ENCODE measurements at regions of chr9 and their contacts with region 1.

Region 1: GRCh38 chr9:122099271-122099869 is 6.3 kb upstream of the TTLL11 start:
- DNase-seq: peak; percentile 79
- H3K4me3 Mint-ChIP-seq: no peak overlapping the region
- H3K27ac Mint-ChIP-seq: no peak overlapping the region
- H3K4me1 Mint-ChIP-seq: peaks cover 6% of the 10 kb centered on the region
- H3K27me3 Mint-ChIP-seq: no peaks in the 10 kb centered on the region
- CTCF ChIP-seq: peak; percentile 84

Region 2: GRCh38 chr9:121545875-121546423 is 553.4 kb before region 1 on chr9:
- CTCF ChIA-PET with region 1: interaction called, 12 read pairs
- POLR2A ChIA-PET with region 1: no interaction called
- intact Hi-C with region 1: loop called (anchors 10 kb)
- DNase-seq: peak; percentile 97
- H3K4me3 Mint-ChIP-seq: peak overlapping the region; percentile 33
- H3K27ac Mint-ChIP-seq: peak overlapping the region; percentile 19
- H3K4me1 Mint-ChIP-seq: no peaks in the 10 kb centered on the region
- H3K27me3 Mint-ChIP-seq: no peaks in the 10 kb centered on the region
- CTCF ChIP-seq: peak; percentile 96

Region 3: GRCh38 chr9:121698627-121699570 is 400.5 kb before region 1 on chr9:
- CTCF ChIA-PET with region 1: no interaction called
- POLR2A ChIA-PET with region 1: no interaction called
- intact Hi-C with region 1: no loop called
- DNase-seq: peak; percentile 47
- H3K4me3 Mint-ChIP-seq: peak overlapping the region; percentile 75
- H3K27ac Mint-ChIP-seq: no peak overlapping the region
- H3K4me1 Mint-ChIP-seq: peaks cover 20% of the 10 kb centered on the region
- H3K27me3 Mint-ChIP-seq: no peaks in the 10 kb centered on the region
- CTCF ChIP-seq: no peak

Region 4: DNA sequence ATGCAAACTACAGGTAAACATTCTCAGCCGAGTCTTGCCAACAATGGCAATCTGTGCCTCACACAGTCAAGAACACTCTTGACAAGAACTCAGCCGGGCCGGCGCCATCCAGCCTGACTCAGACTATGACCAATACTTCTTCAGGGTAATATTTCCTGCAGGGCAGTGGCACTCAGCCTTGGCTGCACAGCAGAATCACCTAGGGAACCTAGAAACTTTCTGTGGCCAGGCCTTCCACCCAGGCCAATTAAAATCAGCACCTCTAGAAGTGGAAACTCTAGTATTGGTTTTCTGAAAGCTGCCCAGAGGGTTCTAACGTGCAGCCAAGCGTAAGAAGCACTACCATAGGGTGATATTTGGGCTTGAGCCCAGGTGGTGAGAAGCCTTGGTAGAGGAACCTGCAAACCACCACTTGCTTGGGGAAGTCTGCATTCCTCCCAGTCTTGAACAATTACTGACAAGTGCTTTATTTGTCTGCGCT is 126.8 kb before region 1 on chr9:
- CTCF ChIA-PET with region 1: no interaction called
- POLR2A ChIA-PET with region 1: no interaction called
- intact Hi-C with region 1: no loop called
- DNase-seq: peak; percentile 95
- H3K4me3 Mint-ChIP-seq: no peak overlapping the region
- H3K27ac Mint-ChIP-seq: peak overlapping the region; percentile 71
- H3K4me1 Mint-ChIP-seq: peaks cover 21% of the 10 kb centered on the region
- H3K27me3 Mint-ChIP-seq: no peaks in the 10 kb centered on the region
- CTCF ChIP-seq: no peak

Region 5: GRCh38 chr9:121989010-121989409 is 110.4 kb before region 1 on chr9:
- CTCF ChIA-PET with region 1: no interaction called
- POLR2A ChIA-PET with region 1: no interaction called
- intact Hi-C with region 1: no loop called
- DNase-seq: no peak
- H3K4me3 Mint-ChIP-seq: no peak overlapping the region
- H3K27ac Mint-ChIP-seq: no peak overlapping the region
- H3K4me1 Mint-ChIP-seq: peaks cover 5% of the 10 kb centered on the region
- H3K27me3 Mint-ChIP-seq: no peaks in the 10 kb centered on the region
- CTCF ChIP-seq: no peak

Region 6: DNA sequence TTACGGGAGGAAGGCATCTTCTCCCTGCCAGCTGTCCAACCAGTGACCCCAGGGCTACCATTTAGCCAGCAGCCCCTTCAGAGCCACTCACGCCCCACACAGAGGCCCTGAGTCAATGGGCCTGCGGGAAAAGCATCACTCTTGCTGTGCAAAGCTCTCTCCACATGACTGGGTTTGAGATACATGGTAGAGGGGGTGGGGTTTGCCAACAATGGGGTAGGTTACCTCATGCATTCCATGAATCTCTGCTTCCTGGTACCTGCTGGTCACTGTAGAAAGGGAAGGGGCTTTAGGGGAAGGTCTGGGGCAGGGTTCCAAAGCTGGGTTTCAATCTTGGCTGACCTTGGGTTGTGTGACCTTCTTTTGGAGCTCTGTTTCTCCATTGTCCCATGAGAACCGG is 16.7 kb after region 1 on chr9:
- CTCF ChIA-PET with region 1: interaction called, 237 read pairs
- POLR2A ChIA-PET with region 1: no interaction called
- intact Hi-C with region 1: no loop called
- DNase-seq: no peak
- H3K4me3 Mint-ChIP-seq: no peak overlapping the region
- H3K27ac Mint-ChIP-seq: no peak overlapping the region
- H3K4me1 Mint-ChIP-seq: peaks cover 5% of the 10 kb centered on the region
- H3K27me3 Mint-ChIP-seq: peaks cover 35% of the 10 kb centered on the region
- CTCF ChIP-seq: no peak

Region 7: DNA sequence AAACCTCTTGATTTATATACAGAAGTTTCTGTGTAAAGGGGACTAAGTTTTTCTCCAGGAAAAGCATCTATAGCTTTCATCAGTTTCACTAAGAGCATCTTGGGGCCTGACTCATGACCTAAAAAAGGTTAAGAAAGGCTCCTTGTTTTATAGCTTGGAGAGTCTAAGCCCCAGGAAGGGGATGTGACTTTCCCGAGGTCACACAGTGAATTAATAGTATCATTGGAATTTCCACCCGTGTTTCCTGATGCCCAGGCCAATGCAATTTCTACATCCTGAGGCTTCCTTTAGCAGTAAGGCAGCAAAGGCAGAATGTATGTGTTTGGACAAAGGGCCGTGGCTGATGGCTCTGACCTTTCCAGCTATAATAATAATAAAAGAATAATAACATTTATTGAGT is 69.0 kb after region 1 on chr9:
- CTCF ChIA-PET with region 1: no interaction called
- POLR2A ChIA-PET with region 1: no interaction called
- intact Hi-C with region 1: no loop called
- DNase-seq: no peak
- H3K4me3 Mint-ChIP-seq: no peak overlapping the region
- H3K27ac Mint-ChIP-seq: no peak overlapping the region
- H3K4me1 Mint-ChIP-seq: peaks cover 7% of the 10 kb centered on the region
- H3K27me3 Mint-ChIP-seq: peaks cover 57% of the 10 kb centered on the region
- CTCF ChIP-seq: no peak

Region 8: DNA sequence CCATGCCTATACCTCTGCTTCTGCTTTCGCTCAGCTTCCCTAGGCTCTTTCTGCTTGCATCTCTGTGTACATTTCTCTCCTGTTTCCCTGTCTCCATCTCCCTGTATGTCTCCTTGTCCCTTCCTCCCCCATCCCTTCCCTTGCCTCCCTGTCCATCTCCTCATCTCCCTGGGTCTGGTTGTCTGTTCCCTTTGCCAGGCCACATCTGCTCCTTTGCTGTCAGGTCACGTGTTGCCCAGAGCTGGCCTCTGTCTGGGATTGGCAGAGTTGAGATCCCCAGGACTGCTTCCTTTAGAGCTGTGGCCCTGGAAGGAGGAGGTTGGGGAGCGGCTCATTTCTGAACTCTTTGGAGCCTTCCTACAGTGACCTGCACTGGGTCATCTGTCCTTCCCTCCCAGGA is 239.6 kb after region 1 on chr9:
- CTCF ChIA-PET with region 1: interaction called, 23 read pairs
- POLR2A ChIA-PET with region 1: no interaction called
- intact Hi-C with region 1: no loop called
- DNase-seq: no peak
- H3K4me3 Mint-ChIP-seq: no peak overlapping the region
- H3K27ac Mint-ChIP-seq: no peak overlapping the region
- H3K4me1 Mint-ChIP-seq: peaks cover 7% of the 10 kb centered on the region
- H3K27me3 Mint-ChIP-seq: peaks cover 20% of the 10 kb centered on the region
- CTCF ChIP-seq: no peak

Region 9: GRCh38 chr9:122364783-122365150 is 265.4 kb after region 1 on chr9:
- CTCF ChIA-PET with region 1: interaction called, 27 read pairs
- POLR2A ChIA-PET with region 1: no interaction called
- intact Hi-C with region 1: no loop called
- DNase-seq: peak; percentile 38
- H3K4me3 Mint-ChIP-seq: no peak overlapping the region
- H3K27ac Mint-ChIP-seq: no peak overlapping the region
- H3K4me1 Mint-ChIP-seq: peaks cover 15% of the 10 kb centered on the region
- H3K27me3 Mint-ChIP-seq: no peaks in the 10 kb centered on the region
- CTCF ChIP-seq: no peak

Region 10: DNA sequence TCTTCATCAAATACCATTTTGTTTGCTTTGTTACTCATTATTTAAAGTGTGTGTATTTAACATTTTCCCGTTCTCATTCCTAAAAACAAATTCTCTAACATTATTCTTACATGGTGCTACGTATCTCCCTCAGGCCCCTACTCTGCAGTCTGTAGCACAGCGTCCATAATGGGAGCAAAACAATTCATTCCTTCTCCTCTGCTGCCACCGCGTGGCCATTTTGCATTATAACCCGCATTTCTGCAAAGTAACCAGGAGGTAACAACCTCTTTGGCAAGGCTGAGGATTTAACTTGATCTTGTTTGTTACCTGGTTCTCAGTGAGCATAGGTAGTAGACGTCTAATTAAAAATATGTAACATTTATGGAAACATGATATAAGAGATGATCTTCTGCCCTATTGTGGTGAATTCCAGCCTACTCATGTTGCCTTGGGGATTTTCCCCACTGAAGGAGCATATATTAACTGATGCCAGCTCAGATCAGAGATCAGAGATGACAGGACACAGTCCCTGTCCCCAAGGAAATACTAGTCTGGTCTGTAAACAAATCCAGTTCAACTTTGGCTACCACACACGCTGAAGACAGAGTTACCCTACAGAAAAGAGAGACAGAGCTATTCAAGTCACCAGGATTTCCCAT is 711.1 kb after region 1 on chr9:
- CTCF ChIA-PET with region 1: interaction called, 6 read pairs
- POLR2A ChIA-PET with region 1: no interaction called
- intact Hi-C with region 1: loop called (anchors 2 kb)
- DNase-seq: peak; percentile 87
- H3K4me3 Mint-ChIP-seq: no peak overlapping the region
- H3K27ac Mint-ChIP-seq: no peak overlapping the region
- H3K4me1 Mint-ChIP-seq: peaks cover 3% of the 10 kb centered on the region
- H3K27me3 Mint-ChIP-seq: no peaks in the 10 kb centered on the region
- CTCF ChIP-seq: peak; percentile 76

Measured in MCF 10A (cell line).